ENCODE measurements at regions of chr2 and their contacts with region 1.

Region 1: GRCh38 chr2:100818606-100819369 is 1.2 kb upstream of the NPAS2 start:
- DNase-seq: peak; percentile 59 to 63
- H3K4me3 ChIP-seq: peak overlapping the region; percentile 44
- H3K4me3 Mint-ChIP-seq: peak overlapping the region; percentile 82
- H3K27ac Mint-ChIP-seq: no peak overlapping the region
- H3K4me1 ChIP-seq: 0 out of 2 replicates have a peak, but pooled peaks cover 5% of the 10 kb centered on the region
- H3K4me1 Mint-ChIP-seq: peaks cover 7% of the 10 kb centered on the region
- H3K27me3 ChIP-seq: no peaks in the 10 kb centered on the region; the same call in 1 of the 2 replicates
- H3K27me3 Mint-ChIP-seq: peaks cover 29% of the 10 kb centered on the region
- CTCF ChIP-seq: peak; percentile 32 to 69

Region 2: DNA sequence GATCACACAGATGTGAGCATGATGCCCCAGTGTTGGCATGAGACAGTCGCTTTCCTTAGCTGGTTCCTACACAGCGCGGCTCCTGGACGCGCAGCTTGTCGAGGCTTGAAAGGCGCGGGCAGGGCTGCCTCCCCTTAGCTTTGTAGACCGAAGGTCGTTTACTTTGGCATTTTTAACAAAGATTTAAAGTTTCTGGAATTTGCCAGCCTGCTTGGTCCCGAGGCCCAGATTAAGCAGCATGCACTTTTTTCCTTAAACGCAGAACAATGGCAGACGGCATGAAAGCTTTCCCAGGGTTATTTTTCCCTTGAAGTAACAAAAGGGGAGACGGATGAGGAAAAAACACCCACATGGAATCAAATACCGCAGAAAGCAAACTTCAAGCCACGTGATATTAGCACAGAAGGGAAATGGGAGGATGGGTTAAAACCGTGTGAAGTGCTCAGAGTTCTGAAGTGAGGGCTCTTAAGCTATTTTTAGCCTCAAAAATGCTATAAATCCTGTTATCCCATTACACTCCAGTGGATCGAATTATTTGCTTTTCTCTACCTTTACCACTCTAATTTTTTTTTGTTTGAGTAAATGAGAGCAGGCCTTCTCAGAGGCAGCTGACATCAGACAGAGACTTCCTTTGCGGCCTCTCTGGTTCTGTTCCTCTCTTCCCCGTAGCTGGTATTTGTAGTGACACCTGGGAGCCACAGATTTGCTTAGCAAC is 56.9 kb after region 1 on chr2:
- CTCF ChIA-PET with region 1: no interaction called
- POLR2A ChIA-PET with region 1: no interaction called
- intact Hi-C with region 1: loop called (anchors 5 kb)
- DNase-seq: peak in 1 of 2 experiments; percentile 45
- H3K4me3 ChIP-seq: no peak overlapping the region
- H3K4me3 Mint-ChIP-seq: peak overlapping the region; percentile 44
- H3K27ac Mint-ChIP-seq: peak overlapping the region; percentile 75
- H3K4me1 ChIP-seq: peaks cover 13% of the 10 kb centered on the region; the same call in 1 of the 2 replicates
- H3K4me1 Mint-ChIP-seq: peaks cover 13% of the 10 kb centered on the region
- H3K27me3 ChIP-seq: no peaks in the 10 kb centered on the region
- H3K27me3 Mint-ChIP-seq: no peaks in the 10 kb centered on the region
- CTCF ChIP-seq: no peak